Activated CD4-positive, alpha-beta T cell treated with anti-CD3 and anti-CD28 coated beads for 36 hours (primary cell): ENCODE measurements at regions of chr1 and their contacts with region 1.

Region 1: DNA sequence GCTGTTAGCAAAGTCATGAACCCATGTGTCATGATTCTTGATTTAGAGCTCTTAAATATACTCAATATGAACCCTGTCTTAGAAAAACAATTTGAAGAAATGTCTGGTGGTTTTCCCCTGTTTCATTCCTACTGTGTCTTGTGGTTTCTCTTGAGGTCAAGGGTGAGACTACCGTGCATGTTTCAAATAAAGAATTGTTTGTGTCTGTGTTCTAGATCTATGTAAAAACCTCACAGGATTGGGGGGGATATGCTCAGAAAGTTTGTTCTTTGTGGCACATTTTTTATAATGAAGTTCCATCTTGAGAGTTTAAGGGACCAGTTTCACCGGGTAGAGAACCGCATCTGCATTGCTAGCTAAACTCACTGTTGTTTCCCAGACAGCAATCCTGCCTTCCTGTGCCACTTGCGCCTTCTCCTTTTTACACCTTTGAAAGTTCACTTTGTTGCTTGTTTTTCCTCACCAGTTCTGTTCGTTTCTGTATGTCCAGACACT is 30.9 kb upstream of the CACYBP start:
- DNase-seq: peak; percentile 31
- ATAC-seq: peak; percentile 61
- H3K4me3 Mint-ChIP-seq: peak overlapping the region; percentile 24
- H3K27ac Mint-ChIP-seq: peak overlapping the region; percentile 70
- H3K4me1 Mint-ChIP-seq: peaks cover 67% of the 10 kb centered on the region
- H3K27me3 Mint-ChIP-seq: no peaks in the 10 kb centered on the region

Region 2: DNA sequence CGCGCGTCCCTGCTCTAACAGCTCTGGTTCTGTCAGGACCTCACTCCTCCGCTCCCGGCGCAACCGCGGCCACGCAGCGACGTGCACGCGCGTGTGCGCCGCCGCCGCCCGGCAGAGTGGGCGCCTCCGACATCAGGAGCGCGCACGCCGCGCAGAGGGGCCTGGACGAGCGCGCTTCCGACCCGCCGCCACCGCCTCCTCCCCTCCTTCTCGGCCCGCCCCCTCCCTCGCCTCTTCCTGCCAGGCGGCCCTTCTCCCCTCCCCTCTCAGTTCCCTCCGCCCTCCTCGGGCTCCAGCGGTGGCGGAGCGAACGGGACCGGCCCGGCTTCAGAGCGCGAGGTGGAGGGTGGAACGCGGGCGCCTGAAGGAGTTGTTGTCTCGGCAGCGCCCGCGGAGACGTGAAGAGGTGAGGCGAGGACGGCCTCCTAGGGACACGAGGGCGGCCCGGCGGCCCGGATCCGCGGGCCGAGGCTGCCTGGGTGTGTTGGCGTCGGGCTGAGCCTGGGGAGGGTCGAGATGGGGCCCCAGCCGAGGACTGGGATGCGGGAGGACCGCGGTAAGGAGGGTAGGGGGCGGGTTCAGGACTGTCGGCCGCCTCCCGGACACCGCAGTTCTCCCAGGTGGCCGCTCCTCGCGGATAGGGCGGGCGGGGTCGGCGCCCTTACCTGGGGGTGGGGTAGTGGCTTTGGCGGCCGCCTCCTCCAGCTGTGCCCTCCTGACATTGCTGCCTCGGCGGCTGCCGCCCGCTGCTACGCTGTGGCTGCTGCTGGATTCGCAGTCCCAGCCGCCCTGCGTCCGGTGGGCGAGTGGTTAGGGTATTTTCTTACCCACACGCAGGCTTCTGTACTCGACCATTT is 809.3 kb before region 1 on chr1 and contains the start of gene RABGAP1L:
- CTCF ChIA-PET with region 1: no interaction called
- POLR2A ChIA-PET with region 1: interaction called, 3 read pairs
- intact Hi-C with region 1: loop called in 1 of 2 experiments (anchors 10 kb)
- DNase-seq: peak; percentile 97
- ATAC-seq: peak; percentile 83
- H3K4me3 Mint-ChIP-seq: peak within 1 kb of the TSS; percentile 93
- H3K27ac Mint-ChIP-seq: peak within 1 kb of the TSS; percentile 95
- H3K4me1 Mint-ChIP-seq: peaks cover 59% of the 10 kb centered on the region
- H3K27me3 Mint-ChIP-seq: no peaks in the 10 kb centered on the region
- total RNA-seq, gene RABGAP1L: 22.6 to 29.9 TPM

Region 3: DNA sequence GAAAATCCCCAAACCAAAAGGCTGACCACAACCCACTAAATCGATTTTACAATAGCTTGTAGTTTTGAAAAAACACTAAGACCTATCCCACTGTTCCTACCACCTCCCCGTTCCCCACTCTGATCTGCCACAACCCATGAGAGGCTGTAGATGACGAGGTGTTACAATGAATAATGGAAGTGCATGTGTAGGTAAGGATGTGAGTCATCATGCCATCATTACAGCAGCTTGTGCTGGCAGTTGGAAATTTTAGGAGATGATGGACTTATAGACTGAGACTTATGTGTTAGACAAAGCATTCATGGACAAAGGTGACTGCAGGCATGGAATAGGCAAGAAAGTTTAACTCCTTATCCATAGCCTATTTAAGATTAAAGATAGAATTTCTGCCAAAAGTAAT is 153.8 kb before region 1 on chr1:
- CTCF ChIA-PET with region 1: no interaction called
- POLR2A ChIA-PET with region 1: interaction called, 4 read pairs
- intact Hi-C with region 1: loop called (anchors 5 kb)
- DNase-seq: peak; percentile 49
- ATAC-seq: peak; percentile 94
- H3K4me3 Mint-ChIP-seq: no peak overlapping the region
- H3K27ac Mint-ChIP-seq: peak overlapping the region; percentile 11
- H3K4me1 Mint-ChIP-seq: peaks cover 23% of the 10 kb centered on the region
- H3K27me3 Mint-ChIP-seq: no peaks in the 10 kb centered on the region

Region 4: GRCh38 chr1:174938281-174939007 is 30.4 kb before region 1 on chr1:
- CTCF ChIA-PET with region 1: no interaction called
- POLR2A ChIA-PET with region 1: no interaction called
- intact Hi-C with region 1: loop called in 1 of 2 experiments (anchors 1 kb)
- DNase-seq: no peak
- ATAC-seq: peak; percentile 69
- H3K4me3 Mint-ChIP-seq: peak overlapping the region; percentile 9
- H3K27ac Mint-ChIP-seq: peak overlapping the region; percentile 43
- H3K4me1 Mint-ChIP-seq: peaks cover 11% of the 10 kb centered on the region
- H3K27me3 Mint-ChIP-seq: no peaks in the 10 kb centered on the region

Region 5: DNA sequence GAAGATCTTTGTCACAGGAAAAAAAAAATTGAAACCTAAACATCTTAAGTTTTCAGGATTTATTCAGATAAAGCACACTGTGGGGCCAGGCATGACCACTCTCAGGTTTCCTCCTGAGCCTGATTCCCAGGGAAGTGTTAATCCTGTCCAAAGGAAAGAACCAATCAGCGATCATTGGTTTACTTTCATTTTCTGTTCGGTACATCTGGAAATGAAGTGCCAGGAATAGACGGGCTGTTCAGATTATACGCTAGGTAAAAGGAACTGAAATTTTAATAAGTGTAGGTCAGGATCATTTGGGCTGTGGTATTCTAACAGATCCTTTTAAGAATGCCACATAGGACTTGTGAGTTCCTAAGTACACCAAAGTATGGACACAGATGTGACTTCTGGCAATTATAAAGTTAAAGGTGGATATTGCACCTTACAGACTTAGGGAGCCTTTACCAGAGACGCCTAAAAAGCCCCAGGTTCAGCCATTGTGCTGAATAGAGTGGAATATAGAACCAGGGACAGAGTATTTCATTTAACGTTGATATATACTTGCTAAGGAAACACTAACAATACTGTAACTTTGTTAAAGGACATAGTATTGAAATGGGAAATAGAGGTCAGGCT is 21.7 kb after region 1 on chr1:
- CTCF ChIA-PET with region 1: interaction called, 5 read pairs
- POLR2A ChIA-PET with region 1: no interaction called
- intact Hi-C with region 1: loop called in 1 of 2 experiments (anchors 2 kb)
- DNase-seq: no peak
- ATAC-seq: peak; percentile 72
- H3K4me3 Mint-ChIP-seq: peak overlapping the region; percentile 76
- H3K27ac Mint-ChIP-seq: peak overlapping the region; percentile 88
- H3K4me1 Mint-ChIP-seq: peaks cover 23% of the 10 kb centered on the region
- H3K27me3 Mint-ChIP-seq: no peaks in the 10 kb centered on the region

Region 6: GRCh38 chr1:175394739-175395138 is 425.9 kb after region 1 on chr1:
- CTCF ChIA-PET with region 1: no interaction called
- POLR2A ChIA-PET with region 1: no interaction called
- intact Hi-C with region 1: no loop called
- DNase-seq: no peak
- ATAC-seq: no peak
- H3K4me3 Mint-ChIP-seq: no peak overlapping the region
- H3K27ac Mint-ChIP-seq: no peak overlapping the region
- H3K4me1 Mint-ChIP-seq: no peaks in the 10 kb centered on the region
- H3K27me3 Mint-ChIP-seq: peaks cover 16% of the 10 kb centered on the region